CD14-positive monocyte (primary cell): ENCODE measurements at regions of chr17 and their contacts with region 1.

Region 1: GRCh38 chr17:82320956-82321927 is 3.8 kb upstream of the CD7 start:
- DNase-seq: peak in 2 of 3 donors; percentile 29 to 50
- H3K4me3 ChIP-seq: no peak overlapping the region
- H3K4me3 Mint-ChIP-seq: no peak overlapping the region
- H3K27ac ChIP-seq: no peak overlapping the region
- H3K27ac Mint-ChIP-seq: peak overlapping the region in 1 of 7 donors; percentile 10
- H3K4me1 ChIP-seq: peaks cover 2 to 10% of the 10 kb centered on the region in 2 donors
- H3K4me1 Mint-ChIP-seq: peaks cover 6% of the 10 kb centered on the region
- H3K27me3 ChIP-seq: peaks cover 0 to 9% of the 10 kb centered on the region in 2 donors
- H3K27me3 Mint-ChIP-seq: peaks cover 12 to 29% (median 13%) of the 10 kb centered on the region in 3 donors
- CTCF ChIP-seq: peak; percentile 98

Region 2: GRCh38 chr17:81927653-81928543 is 393.3 kb before region 1 on chr17 and contains the start of gene MAFG:
- intact Hi-C with region 1: no loop called
- DNase-seq: peak; percentile 89 to 95 (median 95)
- H3K4me3 ChIP-seq: peak within 1 kb of the TSS; percentile 70 to 81 (median 74)
- H3K4me3 Mint-ChIP-seq: peak within 1 kb of the TSS; percentile 91 to 93
- H3K27ac ChIP-seq: peak within 1 kb of the TSS; percentile 95 to 99
- H3K27ac Mint-ChIP-seq: peak within 1 kb of the TSS; percentile 97 to 98 (median 98)
- H3K4me1 ChIP-seq: peaks cover 48 to 54% of the 10 kb centered on the region in 2 donors
- H3K4me1 Mint-ChIP-seq: peaks cover 47% of the 10 kb centered on the region
- H3K27me3 ChIP-seq: peaks cover 9 to 39% of the 10 kb centered on the region in 2 donors
- H3K27me3 Mint-ChIP-seq: peaks cover 31 to 44% (median 32%) of the 10 kb centered on the region in 3 donors
- CTCF ChIP-seq: peak; percentile 33
- polyA plus RNA-seq, gene MAFG: 7.4 to 66.0 (median 7.6) TPM

Region 3: DNA sequence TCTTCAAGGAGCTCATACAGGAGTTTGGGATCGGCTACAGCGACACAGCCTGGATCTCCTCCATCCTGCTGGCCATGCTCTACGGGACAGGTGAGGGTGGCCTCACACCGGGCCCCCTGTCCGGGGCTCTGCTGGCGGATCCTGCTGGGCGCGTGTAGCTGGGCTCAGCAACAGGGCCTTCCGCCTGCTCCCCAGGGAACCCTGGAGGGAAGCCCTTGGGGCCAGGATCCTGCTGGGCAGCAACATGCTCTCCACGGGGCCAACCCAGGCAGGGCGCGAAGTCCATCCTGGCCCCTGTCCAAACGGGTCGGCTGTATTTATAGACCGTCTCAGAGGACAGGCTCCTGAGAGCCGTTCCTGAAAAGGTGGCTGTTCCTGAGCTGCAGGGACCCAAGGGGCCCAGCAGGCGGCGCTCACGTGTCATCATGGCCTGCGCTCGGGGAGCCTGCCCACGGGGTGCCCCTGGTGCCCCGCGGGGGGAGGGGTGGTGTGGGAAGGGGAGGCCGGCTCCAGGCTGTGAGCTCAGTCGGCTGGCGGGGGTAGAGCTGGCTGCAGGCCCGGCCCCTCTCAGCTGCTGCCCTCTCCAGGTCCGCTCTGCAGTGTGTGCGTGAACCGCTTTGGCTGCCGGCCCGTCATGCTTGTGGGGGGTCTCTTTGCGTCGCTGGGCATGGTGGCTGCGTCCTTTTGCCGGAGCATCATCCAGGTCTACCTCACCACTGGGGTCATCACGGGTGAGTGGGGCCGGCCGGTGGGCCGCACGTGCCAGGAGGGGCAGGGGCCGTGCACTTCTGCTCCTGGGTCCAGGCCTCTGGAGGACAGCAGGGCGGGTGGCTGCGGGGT is 84.9 kb before region 1 on chr17:
- intact Hi-C with region 1: loop called (anchors 2 to 5 kb)
- DNase-seq: peak; percentile 65 to 71 (median 66)
- H3K4me3 ChIP-seq: peak overlapping the region in 1 of 3 experiments; percentile 35
- H3K4me3 Mint-ChIP-seq: peak overlapping the region in 1 of 2 donors; percentile 27
- H3K27ac ChIP-seq: peak overlapping the region; percentile 36 to 61
- H3K27ac Mint-ChIP-seq: peak overlapping the region in 3 of 7 donors; percentile 71 to 74 (median 74)
- H3K4me1 ChIP-seq: peaks cover 95 to 100% of the 10 kb centered on the region in 2 donors
- H3K4me1 Mint-ChIP-seq: peaks cover 81% of the 10 kb centered on the region
- H3K27me3 ChIP-seq: no peaks in the 10 kb centered on the region
- H3K27me3 Mint-ChIP-seq: no peaks in the 10 kb centered on the region
- CTCF ChIP-seq: peak; percentile 93

Region 4: GRCh38 chr17:82244413-82245140 is 76.7 kb before region 1 on chr17:
- intact Hi-C with region 1: loop called (anchors 2 to 5 kb)
- DNase-seq: no peak
- H3K4me3 ChIP-seq: no peak overlapping the region
- H3K4me3 Mint-ChIP-seq: no peak overlapping the region
- H3K27ac ChIP-seq: peak overlapping the region in 1 of 2 donors; percentile 74
- H3K27ac Mint-ChIP-seq: peak overlapping the region in 6 of 7 donors; percentile 14 to 77 (median 61)
- H3K4me1 ChIP-seq: peaks cover 40 to 52% of the 10 kb centered on the region in 2 donors
- H3K4me1 Mint-ChIP-seq: peaks cover 62% of the 10 kb centered on the region
- H3K27me3 ChIP-seq: no peaks in the 10 kb centered on the region
- H3K27me3 Mint-ChIP-seq: peaks cover 0 to 6% (median 0%) of the 10 kb centered on the region in 3 donors
- CTCF ChIP-seq: peak; percentile 55

Region 5: DNA sequence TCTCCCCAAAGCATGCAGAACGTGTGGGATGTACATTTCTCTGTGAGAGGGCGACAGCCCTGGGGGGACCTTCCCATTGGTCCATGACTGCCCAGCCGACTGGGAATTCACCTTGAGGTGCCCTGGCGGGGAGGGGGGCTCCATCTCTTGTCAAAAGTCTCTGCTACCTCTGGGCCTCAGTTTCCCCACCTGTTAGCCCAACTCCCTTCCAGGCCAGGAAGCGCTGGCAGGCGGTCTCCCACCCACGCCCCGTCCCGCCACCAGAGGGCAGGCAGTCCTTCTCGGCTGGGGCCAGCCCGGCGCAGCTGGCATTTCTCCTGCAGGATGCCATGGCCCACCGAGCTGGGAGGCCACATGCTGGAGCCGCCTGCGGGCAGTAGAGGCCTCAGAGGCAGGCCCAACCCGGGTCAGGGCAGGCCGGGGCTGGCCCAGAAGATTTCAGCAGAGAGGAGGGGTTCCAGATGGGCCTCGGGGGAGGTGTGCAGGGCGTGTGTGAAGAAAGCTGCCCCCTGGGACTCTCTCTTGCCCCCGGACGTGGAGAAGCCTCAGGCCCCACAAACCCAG is 20.5 kb before region 1 on chr17:
- intact Hi-C with region 1: no loop called
- DNase-seq: peak; percentile 47 to 71 (median 68)
- H3K4me3 ChIP-seq: no peak overlapping the region
- H3K4me3 Mint-ChIP-seq: peak overlapping the region; percentile 21 to 27
- H3K27ac ChIP-seq: no peak overlapping the region
- H3K27ac Mint-ChIP-seq: peak overlapping the region in 3 of 7 donors; percentile 18 to 72 (median 68)
- H3K4me1 ChIP-seq: peaks cover 26 to 35% of the 10 kb centered on the region in 2 donors
- H3K4me1 Mint-ChIP-seq: peaks cover 47% of the 10 kb centered on the region
- H3K27me3 ChIP-seq: peaks cover 5 to 38% of the 10 kb centered on the region in 2 donors
- H3K27me3 Mint-ChIP-seq: peaks cover 32 to 55% (median 42%) of the 10 kb centered on the region in 3 donors
- CTCF ChIP-seq: peak; percentile 95